Natural killer cell (primary cell): ENCODE measurements at regions of chr12 and their contacts with region 1.

Region 1: DNA sequence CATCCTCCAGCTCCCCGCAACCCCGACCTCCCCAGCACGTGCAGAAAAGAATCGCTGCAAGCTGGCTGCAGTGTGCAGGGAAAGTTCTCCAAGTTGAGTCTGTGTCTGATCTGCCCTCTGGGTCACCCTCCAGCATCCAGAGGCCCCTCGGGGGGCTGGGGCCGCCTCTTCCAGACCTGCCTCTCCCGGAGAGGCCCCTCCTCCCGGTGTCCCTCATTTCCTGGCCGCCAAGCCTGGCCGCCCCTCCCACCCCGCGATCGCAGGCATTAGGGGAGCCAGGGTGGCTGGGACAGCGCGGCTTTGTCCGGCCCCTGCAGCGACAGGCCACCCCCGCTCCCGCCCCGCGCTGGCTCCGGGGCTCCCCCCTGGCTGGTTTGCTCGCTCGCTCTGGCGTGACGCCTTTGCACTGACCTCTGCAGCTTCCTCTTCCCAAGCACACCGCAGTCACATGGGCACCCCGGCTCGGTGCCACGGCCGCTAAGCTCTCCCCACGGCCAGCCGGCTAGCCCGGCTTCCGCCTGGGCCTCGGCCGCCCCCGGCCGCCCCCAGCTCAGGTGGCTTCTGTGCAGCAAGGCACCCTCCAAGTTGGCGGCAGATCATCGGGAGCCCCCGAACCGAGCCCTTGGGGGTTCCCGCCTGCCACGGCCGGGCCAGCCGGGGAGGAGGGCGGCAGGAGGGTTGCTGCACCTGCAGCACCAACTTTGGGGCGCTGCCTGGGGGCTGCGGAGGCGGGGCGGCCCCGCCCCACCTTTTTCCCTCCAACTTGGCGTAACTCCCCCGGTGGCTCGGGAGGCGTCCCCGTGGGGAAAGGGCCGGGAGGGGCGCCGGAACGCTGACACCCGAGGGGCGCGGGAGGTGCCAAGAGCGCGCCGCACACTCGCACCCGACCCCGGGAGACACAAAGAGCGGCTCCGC is 43.7 kb downstream of the KDM2B start:
- DNase-seq: peak; percentile 68 to 78
- ATAC-seq: peak; percentile 54 to 85 (median 74)
- H3K4me3 ChIP-seq: peak overlapping the region; percentile 53
- H3K4me3 Mint-ChIP-seq: peak overlapping the region; percentile 82
- H3K27ac ChIP-seq: peak overlapping the region; percentile 95
- H3K27ac Mint-ChIP-seq: peak overlapping the region; percentile 82 to 83
- H3K4me1 ChIP-seq: peaks cover 48% of the 10 kb centered on the region
- H3K4me1 Mint-ChIP-seq: peaks cover 32 to 45% of the 10 kb centered on the region in 2 donors
- H3K27me3 ChIP-seq: no peaks in the 10 kb centered on the region
- H3K27me3 Mint-ChIP-seq: no peaks in the 10 kb centered on the region
- CTCF ChIP-seq: no peak

Region 2: DNA sequence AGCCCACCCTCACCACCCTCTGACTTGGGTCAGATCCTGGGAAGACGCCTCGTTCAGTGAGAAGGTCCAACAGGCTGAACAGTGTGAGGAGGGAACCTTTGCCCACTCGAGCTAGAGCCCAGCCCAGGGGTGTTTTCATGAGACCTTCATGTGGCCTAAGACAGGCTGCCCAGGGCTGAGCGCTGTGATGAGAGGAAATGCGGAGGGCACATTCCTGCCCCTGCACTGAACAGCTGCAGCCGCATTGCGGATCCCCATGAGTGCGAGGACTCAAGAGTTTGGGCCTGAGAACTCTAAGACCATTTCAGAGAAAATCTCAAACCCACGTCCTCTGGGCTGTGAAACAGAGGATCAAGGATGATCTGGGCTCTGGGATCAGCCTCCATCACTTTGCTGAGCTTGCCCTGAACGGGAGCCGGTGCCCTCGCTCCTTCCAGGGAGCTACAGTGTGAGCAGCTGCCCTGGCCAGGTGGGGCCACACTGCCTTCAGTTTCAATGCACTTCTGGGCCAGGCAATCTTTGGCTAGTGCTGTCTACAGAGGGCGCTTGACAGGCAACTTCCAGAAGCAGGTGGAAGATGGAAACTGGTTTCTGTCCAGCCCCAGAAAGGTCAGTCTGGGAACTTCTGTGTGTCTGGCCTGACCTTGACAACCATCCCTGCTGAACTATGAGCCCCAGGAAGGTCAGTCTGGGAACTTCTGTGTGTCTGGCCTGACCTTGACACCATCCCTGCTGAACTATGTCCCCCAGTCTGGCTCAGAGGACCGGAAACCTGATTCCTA is 447.9 kb before region 1 on chr12:
- intact Hi-C with region 1: no loop called
- DNase-seq: no peak
- ATAC-seq: no peak
- H3K4me3 ChIP-seq: no peak overlapping the region
- H3K4me3 Mint-ChIP-seq: no peak overlapping the region
- H3K27ac ChIP-seq: no peak overlapping the region
- H3K27ac Mint-ChIP-seq: no peak overlapping the region
- H3K4me1 ChIP-seq: peaks cover 34% of the 10 kb centered on the region
- H3K4me1 Mint-ChIP-seq: peaks cover 50 to 51% of the 10 kb centered on the region in 2 donors
- H3K27me3 ChIP-seq: no peaks in the 10 kb centered on the region
- H3K27me3 Mint-ChIP-seq: no peaks in the 10 kb centered on the region
- CTCF ChIP-seq: no peak

Region 3: GRCh38 chr12:121499929-121500793 is 37.0 kb before region 1 on chr12:
- intact Hi-C with region 1: loop called (anchors 5 kb)
- DNase-seq: peak; percentile 76 to 87
- ATAC-seq: peak; percentile 74 to 78 (median 75)
- H3K4me3 ChIP-seq: no peak overlapping the region
- H3K4me3 Mint-ChIP-seq: no peak overlapping the region
- H3K27ac ChIP-seq: no peak overlapping the region
- H3K27ac Mint-ChIP-seq: peak overlapping the region in 1 of 2 donors; percentile 59
- H3K4me1 ChIP-seq: peaks cover 57% of the 10 kb centered on the region
- H3K4me1 Mint-ChIP-seq: peaks cover 17 to 36% of the 10 kb centered on the region in 2 donors
- H3K27me3 ChIP-seq: no peaks in the 10 kb centered on the region
- H3K27me3 Mint-ChIP-seq: no peaks in the 10 kb centered on the region
- CTCF ChIP-seq: peak; percentile 98

Region 4: GRCh38 chr12:121590476-121591143 is 53.5 kb after region 1 on chr12:
- intact Hi-C with region 1: loop called (anchors 5 kb)
- DNase-seq: peak; percentile 63 to 89
- ATAC-seq: peak; percentile 74 to 84 (median 78)
- H3K4me3 ChIP-seq: peak overlapping the region; percentile 37
- H3K4me3 Mint-ChIP-seq: peak overlapping the region; percentile 89
- H3K27ac ChIP-seq: peak overlapping the region; percentile 98
- H3K27ac Mint-ChIP-seq: peak overlapping the region; percentile 95 to 99
- H3K4me1 ChIP-seq: peaks cover 39% of the 10 kb centered on the region
- H3K4me1 Mint-ChIP-seq: peaks cover 32 to 37% of the 10 kb centered on the region in 2 donors
- H3K27me3 ChIP-seq: no peaks in the 10 kb centered on the region
- H3K27me3 Mint-ChIP-seq: no peaks in the 10 kb centered on the region
- CTCF ChIP-seq: no peak